GM23248 (cell line): ENCODE measurements at regions of chr1 and their contacts with region 1.

Region 1: GRCh38 chr1:88608139-88608943 is 75.7 kb upstream of the PKN2 start:
- DNase-seq: peak; percentile 54
- H3K4me3 ChIP-seq: no peak overlapping the region
- H3K27ac ChIP-seq: no peak overlapping the region
- H3K4me1 ChIP-seq: no peaks in the 10 kb centered on the region
- H3K27me3 ChIP-seq: no peaks in the 10 kb centered on the region

Region 2: DNA sequence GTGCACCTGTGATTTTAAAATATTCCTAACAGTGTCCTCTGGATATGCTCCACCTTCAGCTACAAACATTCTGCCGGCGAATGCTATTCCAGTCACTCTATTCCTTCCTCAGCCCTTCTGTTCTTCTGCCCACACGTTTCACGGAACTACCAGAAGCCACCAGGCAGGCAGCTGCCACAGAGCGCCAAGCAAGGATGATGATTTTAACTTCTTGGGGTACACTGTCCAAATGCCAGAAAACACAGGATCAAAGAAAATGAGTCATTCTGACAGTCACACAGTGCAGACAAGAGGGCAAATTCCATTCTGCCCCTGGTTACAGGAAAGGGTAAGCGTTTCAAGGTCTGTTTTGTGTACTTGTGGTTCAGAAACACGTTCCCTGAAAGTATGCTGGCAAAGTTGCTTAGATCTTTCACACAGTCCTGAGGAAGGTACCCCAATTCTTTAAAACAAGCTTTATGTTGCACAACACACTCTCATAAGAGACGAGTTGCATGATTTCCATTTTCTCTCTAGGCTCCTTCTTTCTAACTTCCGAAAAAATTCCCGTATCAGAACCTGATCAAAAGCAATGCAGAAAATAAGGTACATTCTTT is 432.6 kb before region 1 on chr1:
- in situ Hi-C with region 1: no loop called
- DNase-seq: no peak
- H3K4me3 ChIP-seq: no peak overlapping the region
- H3K27ac ChIP-seq: no peak overlapping the region
- H3K4me1 ChIP-seq: no peaks in the 10 kb centered on the region
- H3K27me3 ChIP-seq: no peaks in the 10 kb centered on the region

Region 3: DNA sequence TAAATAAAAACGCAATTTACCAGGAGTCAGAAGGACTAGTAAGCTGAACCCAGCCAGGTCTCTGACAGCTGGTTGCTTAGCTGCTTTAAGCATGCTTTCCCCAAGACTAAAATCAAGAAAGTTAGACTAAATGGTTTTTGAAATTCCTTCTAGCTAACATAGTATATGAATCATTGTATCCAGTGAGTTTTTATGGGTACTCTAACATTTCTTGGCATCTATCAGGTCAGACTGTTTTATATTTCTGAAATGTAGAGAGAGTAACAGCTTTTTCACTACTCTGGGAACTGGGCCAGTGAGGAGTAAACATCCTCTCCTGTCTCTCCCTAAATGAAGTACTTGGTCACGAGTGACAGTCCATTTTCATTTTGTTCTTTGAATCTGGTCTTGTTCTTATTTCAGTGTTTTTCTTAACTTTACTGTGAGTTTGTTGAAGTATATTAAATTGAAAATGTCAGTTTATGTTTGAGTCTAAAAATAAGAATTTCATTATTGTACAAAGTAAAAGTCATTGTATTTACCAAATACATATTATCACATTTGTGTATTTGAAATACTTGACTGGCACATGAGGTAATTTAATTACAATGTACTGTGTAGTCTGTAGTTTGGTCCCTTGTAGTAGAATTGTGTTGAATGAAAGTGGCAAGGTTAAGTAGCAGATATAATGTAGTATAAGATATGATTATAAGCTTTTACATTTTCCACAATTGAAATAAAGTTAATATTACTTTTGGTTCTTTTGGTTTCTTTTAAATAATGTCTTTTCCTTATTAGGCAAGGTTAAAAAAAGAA is 123.3 kb after region 1 on chr1:
- in situ Hi-C with region 1: no loop called
- DNase-seq: peak; percentile 94
- H3K4me3 ChIP-seq: peak overlapping the region; percentile 62
- H3K27ac ChIP-seq: peak overlapping the region; percentile 59
- H3K4me1 ChIP-seq: peaks cover 20% of the 10 kb centered on the region
- H3K27me3 ChIP-seq: no peaks in the 10 kb centered on the region

Region 4: GRCh38 chr1:88791192-88791591 is 182.9 kb after region 1 on chr1:
- in situ Hi-C with region 1: no loop called
- DNase-seq: peak; percentile 33
- H3K4me3 ChIP-seq: no peak overlapping the region
- H3K27ac ChIP-seq: peak overlapping the region; percentile 31; the same call in 1 of the 2 replicates
- H3K4me1 ChIP-seq: no peaks in the 10 kb centered on the region
- H3K27me3 ChIP-seq: no peaks in the 10 kb centered on the region

Region 5: DNA sequence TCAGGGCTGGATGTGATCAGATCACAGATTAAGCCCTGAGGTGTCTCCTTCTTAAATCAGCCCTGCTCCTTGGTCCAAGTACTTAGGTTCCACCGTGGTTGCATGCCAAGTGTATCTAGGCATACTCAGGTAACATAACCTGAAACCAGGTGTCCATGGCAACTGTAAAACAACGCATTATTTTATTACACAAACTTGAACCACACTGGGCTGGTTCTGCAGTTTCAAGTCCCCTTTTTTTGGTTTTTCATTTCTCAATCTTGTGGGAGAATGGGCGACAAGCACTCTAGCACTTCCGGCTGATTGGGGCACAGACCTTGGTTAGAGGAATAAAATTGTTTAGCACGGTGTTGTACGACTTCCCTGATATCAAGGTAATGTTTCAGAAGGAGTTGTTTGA is 820.7 kb after region 1 on chr1:
- in situ Hi-C with region 1: loop called (anchors 25 kb)
- DNase-seq: no peak
- H3K4me3 ChIP-seq: no peak overlapping the region
- H3K27ac ChIP-seq: no peak overlapping the region
- H3K4me1 ChIP-seq: no peaks in the 10 kb centered on the region
- H3K27me3 ChIP-seq: no peaks in the 10 kb centered on the region; the same call in 1 of the 2 replicates

Region 6: DNA sequence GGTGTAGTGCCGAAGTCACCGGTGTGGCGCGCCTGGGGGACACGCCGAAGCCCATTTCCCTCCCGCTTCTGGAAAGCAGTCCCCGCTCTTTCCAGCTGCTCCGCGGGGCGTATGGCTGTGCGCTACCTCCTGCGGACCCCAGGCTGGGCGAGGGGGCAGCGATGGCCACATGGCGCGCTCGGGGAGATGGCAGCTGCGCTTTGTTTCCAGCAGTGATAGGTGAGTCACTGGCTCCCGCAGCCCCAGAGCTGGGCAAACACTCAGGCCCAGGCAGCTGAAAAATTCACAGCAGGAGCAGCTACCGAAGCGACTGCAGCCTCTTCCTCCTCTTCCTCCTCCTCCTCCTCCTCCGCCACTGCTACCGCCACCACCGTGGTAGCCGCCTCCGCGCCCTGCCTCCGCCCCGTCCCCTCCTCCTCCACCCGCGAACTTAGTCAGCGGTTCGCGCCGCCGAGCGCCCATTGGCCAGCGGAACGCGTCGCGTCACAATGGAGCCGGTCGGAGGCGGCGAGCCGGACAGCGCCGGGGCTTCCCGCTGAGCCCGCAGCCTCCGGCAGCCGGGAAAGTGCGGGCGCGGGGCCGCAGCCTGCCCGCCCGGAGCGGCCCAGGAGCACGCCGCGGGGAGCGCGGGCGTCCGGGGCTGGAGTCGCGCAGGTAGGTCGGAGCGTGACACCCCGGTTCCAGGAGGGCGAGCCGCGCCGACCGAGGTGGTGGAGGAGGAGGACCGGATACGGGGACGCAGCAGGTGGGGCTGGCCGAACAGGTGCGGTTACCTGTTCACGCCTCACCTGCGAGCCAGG is 916.2 kb after region 1 on chr1 and contains the start of gene LRRC8B:
- in situ Hi-C with region 1: no loop called
- DNase-seq: peak; percentile 93
- H3K4me3 ChIP-seq: peak within 1 kb of the TSS; percentile 78
- H3K27ac ChIP-seq: no peak within 1 kb of the TSS
- H3K4me1 ChIP-seq: no peaks in the 10 kb centered on the region
- H3K27me3 ChIP-seq: no peaks in the 10 kb centered on the region
- total RNA-seq, gene LRRC8B: 0.32 and 0.63 TPM in 2 replicates